ENCODE measurements at regions of chr15 and their contacts with region 1.

Region 1: GRCh38 chr15:23033979-23034378 is 5.4 kb downstream of the TUBGCP5 start:
- DNase-seq: no peak
- H3K4me3 Mint-ChIP-seq: no peak overlapping the region
- H3K27ac Mint-ChIP-seq: no peak overlapping the region
- H3K4me1 Mint-ChIP-seq: peaks cover 19% of the 10 kb centered on the region
- H3K27me3 Mint-ChIP-seq: no peaks in the 10 kb centered on the region

Region 2: DNA sequence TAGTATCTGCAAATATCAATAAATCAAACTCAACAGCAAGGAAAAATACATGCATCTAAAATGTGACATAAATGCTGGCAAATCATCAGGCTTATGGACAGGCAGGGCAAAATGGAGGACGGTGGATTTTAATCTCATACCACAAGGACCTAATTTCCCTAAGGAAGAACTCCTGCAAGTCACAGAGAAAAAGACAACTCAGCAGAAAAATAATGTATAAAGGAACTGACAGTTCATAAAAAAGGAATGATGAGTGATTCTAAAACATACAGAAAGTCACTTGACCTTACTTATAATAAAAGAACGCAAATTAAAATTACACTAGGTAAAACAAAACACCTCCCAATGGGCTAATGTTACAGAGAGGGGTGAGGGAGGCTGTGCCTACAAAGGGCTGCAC is 11.8 kb before region 1 on chr15:
- intact Hi-C with region 1: loop called (anchors 1 kb)
- DNase-seq: no peak
- H3K4me3 Mint-ChIP-seq: no peak overlapping the region
- H3K27ac Mint-ChIP-seq: no peak overlapping the region
- H3K4me1 Mint-ChIP-seq: no peaks in the 10 kb centered on the region
- H3K27me3 Mint-ChIP-seq: no peaks in the 10 kb centered on the region

Region 3: GRCh38 chr15:23118203-23118602 is 84.2 kb after region 1 on chr15:
- intact Hi-C with region 1: no loop called
- DNase-seq: no peak
- H3K4me3 Mint-ChIP-seq: no peak overlapping the region
- H3K27ac Mint-ChIP-seq: no peak overlapping the region
- H3K4me1 Mint-ChIP-seq: no peaks in the 10 kb centered on the region
- H3K27me3 Mint-ChIP-seq: peaks cover 4% of the 10 kb centered on the region

Measured in activated CD4-positive, alpha-beta T cell treated with anti-CD3 and anti-CD28 coated beads, Interleukin-2, amount 10 ng/mL, durations not matched to agents 24 days and 14 days (primary cell).